Transverse colon (tissue), 4 donors: ENCODE measurements at regions of chr3 and their contacts with region 1.

Region 1: GRCh38 chr3:12135029-12135657 is 23.6 kb downstream of the TIMP4 start:
- DNase-seq: peak; percentile 77
- H3K4me3 ChIP-seq: no peak overlapping the region
- H3K27ac ChIP-seq: no peak overlapping the region
- H3K4me1 ChIP-seq: peaks cover 0 to 19% (median 8%) of the 10 kb centered on the region in 4 donors
- H3K27me3 ChIP-seq: peaks cover 5% of the 10 kb centered on the region
- CTCF ChIP-seq: peak; percentile 83 to 90 (median 87)
- EP300 ChIP-seq: no peak
- POLR2A ChIP-seq: no peak

Region 2: GRCh38 chr3:12175844-12176453 is 40.8 kb after region 1 on chr3:
- in situ Hi-C with region 1: no loop called
- intact Hi-C with region 1: loop called (anchors 5 kb)
- DNase-seq: peak; percentile 67
- H3K4me3 ChIP-seq: no peak overlapping the region
- H3K27ac ChIP-seq: no peak overlapping the region
- H3K4me1 ChIP-seq: peaks cover 0 to 20% (median 4%) of the 10 kb centered on the region in 4 donors
- H3K27me3 ChIP-seq: no peaks in the 10 kb centered on the region
- CTCF ChIP-seq: peak; percentile 74 to 83 (median 77)
- EP300 ChIP-seq: no peak
- POLR2A ChIP-seq: no peak

Region 3: GRCh38 chr3:12484198-12484974 is 349.2 kb after region 1 on chr3 and contains the start of gene TSEN2:
- in situ Hi-C with region 1: loop called in 3 of 4 experiments (anchors 5 to 25 kb)
- intact Hi-C with region 1: loop called (anchors 5 kb)
- DNase-seq: peak; percentile 96
- H3K4me3 ChIP-seq: peak within 1 kb of the TSS; percentile 58 to 75 (median 62)
- H3K27ac ChIP-seq: peak within 1 kb of the TSS; percentile 80 to 91 (median 87)
- H3K4me1 ChIP-seq: peaks cover 9 to 50% (median 28%) of the 10 kb centered on the region in 4 donors
- H3K27me3 ChIP-seq: no peaks in the 10 kb centered on the region
- CTCF ChIP-seq: peak in 3 of 5 experiments; percentile 7 to 21 (median 12)
- EP300 ChIP-seq: no peak
- POLR2A ChIP-seq: peak; percentile 93
- total RNA-seq, gene TSEN2: 20.9 to 47.6 (median 30.1) TPM

Region 4: GRCh38 chr3:12719984-12720898 is 585.1 kb after region 1 on chr3:
- in situ Hi-C with region 1: loop called in 2 of 4 experiments (anchors 25 kb)
- intact Hi-C with region 1: no loop called
- DNase-seq: peak; percentile 78
- H3K4me3 ChIP-seq: peak overlapping the region in 1 of 4 donors; percentile 42
- H3K27ac ChIP-seq: peak overlapping the region in 1 of 4 donors; percentile 12
- H3K4me1 ChIP-seq: peaks cover 0 to 15% (median 4%) of the 10 kb centered on the region in 4 donors
- H3K27me3 ChIP-seq: no peaks in the 10 kb centered on the region
- CTCF ChIP-seq: peak; percentile 86 to 92 (median 89)
- EP300 ChIP-seq: no peak
- POLR2A ChIP-seq: no peak